BJ (cell line): ENCODE measurements at regions of chr9 and their contacts with region 1.

Region 1: DNA sequence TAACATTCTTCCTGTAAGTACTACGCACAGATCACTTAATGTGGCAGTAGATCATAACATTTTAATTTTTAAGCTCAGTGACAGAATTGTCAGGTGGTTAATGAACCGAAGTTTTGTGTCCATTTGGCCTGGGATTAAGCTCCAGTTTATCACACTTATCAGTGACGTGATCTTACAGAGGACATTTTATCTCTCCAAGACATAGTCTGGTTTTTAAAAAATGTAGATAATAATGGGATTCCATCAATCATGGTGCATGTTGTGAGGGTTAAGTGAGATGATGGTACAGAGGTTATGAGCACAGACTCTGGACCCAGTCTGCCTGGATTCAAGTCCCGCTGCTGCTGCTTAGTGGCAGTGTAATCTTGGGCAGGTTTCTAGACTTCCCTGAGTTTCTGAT is 66.0 kb upstream of the ZFAND5 start:
- DNase-seq: no peak
- H3K4me3 ChIP-seq: no peak overlapping the region
- H3K27me3 ChIP-seq: no peaks in the 10 kb centered on the region
- CTCF ChIP-seq: no peak

Region 2: DNA sequence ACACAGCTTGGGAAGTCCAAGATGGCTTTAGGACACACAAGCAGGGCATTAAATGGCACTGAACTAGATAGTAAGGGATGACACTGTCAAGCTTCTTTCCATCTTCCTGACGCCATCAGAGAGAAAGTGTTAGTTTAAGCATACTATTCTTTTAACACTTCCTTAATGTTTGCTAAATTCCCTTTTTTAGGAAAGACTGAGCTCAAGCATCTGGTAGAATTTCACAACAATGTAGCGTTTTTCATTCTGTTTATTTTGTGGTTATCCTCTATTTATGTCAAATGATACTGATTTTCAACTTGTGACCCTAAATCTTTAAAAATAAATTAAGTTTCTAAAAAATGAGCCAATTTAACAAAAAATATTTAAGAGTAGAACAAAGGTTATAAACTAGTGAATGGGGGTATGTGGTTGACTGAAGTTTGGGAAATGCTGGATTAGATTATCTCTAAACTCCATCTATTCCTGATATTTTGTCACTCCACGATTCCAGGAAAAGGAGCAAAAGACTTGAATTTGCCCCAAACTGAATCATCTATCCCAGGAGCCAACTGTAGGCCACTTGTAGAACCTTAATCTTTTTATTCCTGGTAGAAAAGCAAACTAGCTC is 1869.1 kb before region 1 on chr9:
- CTCF ChIA-PET with region 1: no interaction called
- POLR2A ChIA-PET with region 1: interaction called, 12 read pairs
- DNase-seq: peak; percentile 59
- H3K4me3 ChIP-seq: no peak overlapping the region
- H3K27me3 ChIP-seq: no peaks in the 10 kb centered on the region
- CTCF ChIP-seq: no peak

Region 3: DNA sequence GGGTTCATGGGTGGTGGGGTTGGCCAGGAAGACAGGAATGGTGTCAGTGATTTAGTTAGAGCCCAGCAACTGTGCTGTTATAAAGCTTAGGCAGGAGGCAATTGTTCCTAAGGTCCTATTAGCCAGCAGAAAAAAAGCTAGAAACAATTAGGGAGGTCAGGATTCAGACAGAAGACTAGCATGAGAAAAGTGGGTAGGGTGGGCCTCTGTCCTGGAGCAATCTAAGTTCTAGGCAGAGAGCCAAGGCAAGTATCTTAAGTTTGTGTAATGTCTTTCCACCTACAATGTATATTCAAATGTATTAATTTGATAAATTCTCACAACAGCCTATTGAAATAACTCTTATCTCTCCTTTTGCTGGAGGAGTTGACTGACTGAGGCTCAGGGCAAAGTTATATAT is 59.9 kb before region 1 on chr9:
- CTCF ChIA-PET with region 1: no interaction called
- POLR2A ChIA-PET with region 1: no interaction called
- DNase-seq: no peak
- H3K4me3 ChIP-seq: no peak overlapping the region
- H3K27me3 ChIP-seq: no peaks in the 10 kb centered on the region
- CTCF ChIP-seq: no peak